Ascending aorta (tissue), 2 donors: ENCODE measurements at regions of chr6 and their contacts with region 1.

Region 1: GRCh38 chr6:4775584-4776494 is at the start of gene CDYL:
- DNase-seq: peak; percentile 38 to 93
- H3K4me3 ChIP-seq: peak within 1 kb of the TSS; percentile 93 to 97
- H3K27ac ChIP-seq: peak within 1 kb of the TSS; percentile 75 to 95
- H3K4me1 ChIP-seq: peaks cover 5 to 9% of the 10 kb centered on the region in 2 donors
- H3K27me3 ChIP-seq: no peaks in the 10 kb centered on the region
- CTCF ChIP-seq: peak in 2 of 3 experiments; percentile 12 to 33
- total RNA-seq, gene CDYL: 73.7 TPM

Region 2: GRCh38 chr6:4313044-4313686 is 462.7 kb before region 1 on chr6:
- intact Hi-C with region 1: loop called (anchors 1 kb)
- DNase-seq: peak in 1 of 2 donors; percentile 87
- H3K4me3 ChIP-seq: peak overlapping the region in 1 of 2 donors; percentile 12
- H3K27ac ChIP-seq: peak overlapping the region; percentile 46 to 64
- H3K4me1 ChIP-seq: peaks cover 0 to 11% of the 10 kb centered on the region in 2 donors
- H3K27me3 ChIP-seq: no peaks in the 10 kb centered on the region
- CTCF ChIP-seq: peak in 2 of 3 experiments; percentile 23 to 40

Region 3: GRCh38 chr6:4402439-4402976 is 373.3 kb before region 1 on chr6:
- intact Hi-C with region 1: loop called (anchors 5 kb)
- DNase-seq: no peak
- H3K4me3 ChIP-seq: peak overlapping the region in 1 of 2 donors; percentile 6
- H3K27ac ChIP-seq: peak overlapping the region; percentile 37 to 46
- H3K4me1 ChIP-seq: peaks cover 0 to 11% of the 10 kb centered on the region in 2 donors
- H3K27me3 ChIP-seq: no peaks in the 10 kb centered on the region
- CTCF ChIP-seq: no peak

Region 4: DNA sequence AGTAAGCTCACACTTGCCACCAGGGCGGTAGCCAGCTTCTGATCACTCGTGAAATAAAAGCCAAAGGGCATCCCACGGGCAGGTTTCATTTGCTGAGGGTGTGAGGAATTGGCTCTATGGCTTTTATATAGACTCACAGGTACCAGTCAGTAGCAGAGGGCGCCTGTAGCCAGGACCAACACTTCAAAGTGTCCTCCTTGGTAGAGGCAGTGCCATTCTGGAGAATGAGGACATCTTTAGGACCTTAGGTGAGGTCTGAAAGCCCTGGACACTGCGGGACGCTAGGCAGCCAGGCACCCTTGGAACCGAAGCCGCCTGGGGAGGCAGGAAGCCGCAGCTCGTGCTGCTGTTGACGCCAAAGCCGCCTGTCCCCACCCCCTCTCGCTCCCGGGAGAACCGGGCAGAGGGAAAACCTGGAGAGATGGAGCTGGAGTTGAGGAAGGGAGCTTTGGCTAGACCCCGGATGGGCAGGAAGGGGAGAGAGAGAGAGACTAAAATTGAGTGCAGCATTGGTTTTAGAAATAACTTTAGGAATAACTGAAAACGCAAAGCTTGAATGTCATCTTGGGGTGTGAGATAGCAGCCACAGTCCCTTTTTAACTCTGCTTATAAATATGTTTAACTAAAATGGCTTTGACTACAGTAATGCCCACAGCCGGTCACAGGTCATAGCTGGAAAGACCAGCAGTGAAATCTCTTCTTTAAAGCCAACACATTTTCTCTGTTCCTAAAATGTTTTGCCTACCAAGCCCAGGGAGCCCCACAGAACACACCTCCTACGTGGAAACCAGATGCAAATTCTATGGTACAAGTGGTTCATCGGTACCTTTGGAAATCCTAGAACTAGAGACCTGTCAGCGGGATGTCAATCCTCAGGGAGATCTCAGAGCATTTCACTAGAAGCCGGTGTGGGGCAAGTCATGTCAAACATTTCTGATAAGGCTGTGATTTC is 128.1 kb before region 1 on chr6:
- intact Hi-C with region 1: loop called (anchors 1 kb)
- DNase-seq: peak; percentile 18 to 80
- H3K4me3 ChIP-seq: peak overlapping the region; percentile 35 to 56
- H3K27ac ChIP-seq: no peak overlapping the region
- H3K4me1 ChIP-seq: peaks cover 0 to 4% of the 10 kb centered on the region in 2 donors
- H3K27me3 ChIP-seq: no peaks in the 10 kb centered on the region
- CTCF ChIP-seq: no peak

Region 5: DNA sequence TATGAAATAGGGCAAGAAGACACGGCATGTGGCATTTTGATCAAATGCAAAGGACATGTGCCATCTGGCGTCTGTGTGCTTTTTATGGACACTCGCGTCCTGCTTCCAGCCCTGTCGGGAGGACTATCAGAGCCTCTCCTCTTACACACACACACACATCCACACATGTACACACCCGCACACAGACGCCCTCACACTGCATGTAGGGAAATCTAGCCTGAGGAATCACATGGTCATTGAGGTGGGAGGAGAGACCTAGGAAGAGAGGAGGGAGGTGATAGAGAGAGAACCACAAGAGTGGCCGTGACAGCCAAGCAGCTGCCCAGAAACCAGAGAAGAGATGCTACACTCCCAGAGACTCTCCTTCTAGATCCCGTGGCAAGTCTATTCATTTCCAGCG is 105.5 kb before region 1 on chr6:
- intact Hi-C with region 1: no loop called
- DNase-seq: peak in 1 of 2 donors; percentile 24
- H3K4me3 ChIP-seq: no peak overlapping the region
- H3K27ac ChIP-seq: no peak overlapping the region
- H3K4me1 ChIP-seq: peaks cover 0 to 11% of the 10 kb centered on the region in 2 donors
- H3K27me3 ChIP-seq: no peaks in the 10 kb centered on the region
- CTCF ChIP-seq: no peak

Region 6: GRCh38 chr6:4687989-4688947 is 87.6 kb before region 1 on chr6:
- intact Hi-C with region 1: no loop called
- DNase-seq: no peak
- H3K4me3 ChIP-seq: no peak overlapping the region
- H3K27ac ChIP-seq: no peak overlapping the region
- H3K4me1 ChIP-seq: no peaks in the 10 kb centered on the region
- H3K27me3 ChIP-seq: no peaks in the 10 kb centered on the region
- CTCF ChIP-seq: no peak

Region 7: GRCh38 chr6:5003604-5004372 is 227.9 kb after region 1 on chr6 and contains the start of gene RPP40:
- intact Hi-C with region 1: loop called (anchors 1 kb)
- DNase-seq: peak; percentile 93 to 99
- H3K4me3 ChIP-seq: peak within 1 kb of the TSS; percentile 56 to 71
- H3K27ac ChIP-seq: peak within 1 kb of the TSS; percentile 92 to 95
- H3K4me1 ChIP-seq: no peaks in the 10 kb centered on the region
- H3K27me3 ChIP-seq: no peaks in the 10 kb centered on the region
- CTCF ChIP-seq: peak; percentile 72 to 93 (median 93)
- total RNA-seq, gene RPP40: not detected